Ovary (tissue), 10 donors: ENCODE measurements at regions of chr2 and their contacts with region 1.

Region 1: DNA sequence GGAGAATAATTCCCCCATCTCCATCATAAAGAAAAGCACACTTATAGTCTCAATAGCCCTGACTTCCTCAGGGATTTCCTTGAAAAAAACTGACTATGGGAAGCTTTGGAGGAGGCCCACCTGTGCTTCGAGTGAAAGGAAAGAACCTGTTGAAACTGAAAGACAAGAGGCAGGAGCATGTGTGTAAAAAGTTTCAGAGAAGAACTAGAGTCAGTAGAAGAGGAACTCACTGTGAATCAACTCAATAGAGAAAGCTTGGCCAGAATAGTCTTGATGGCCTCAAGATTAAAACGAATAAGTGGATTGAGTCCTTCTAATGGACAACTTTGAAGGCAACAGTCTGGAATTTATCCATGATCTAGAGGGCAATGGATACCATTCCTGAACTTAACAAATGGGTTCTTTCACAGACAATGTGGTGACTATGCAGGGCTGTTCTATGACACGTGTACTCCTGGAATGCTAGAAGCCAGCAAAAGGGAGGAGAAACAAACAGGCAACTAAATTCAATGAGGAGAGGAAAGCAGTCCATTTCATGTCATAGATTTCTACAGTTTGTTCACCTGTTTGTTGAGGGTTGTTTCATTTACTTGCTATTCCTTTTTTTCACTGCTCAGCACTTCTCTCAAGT is 442.3 kb downstream of the GRB14 start:
- DNase-seq: no peak
- H3K4me3 ChIP-seq: no peak overlapping the region
- H3K27ac ChIP-seq: no peak overlapping the region
- H3K4me1 ChIP-seq: no peaks in the 10 kb centered on the region
- H3K27me3 ChIP-seq: no peaks in the 10 kb centered on the region
- CTCF ChIP-seq: no peak
- EP300 ChIP-seq: no peak
- POLR2A ChIP-seq: no peak

Region 2: DNA sequence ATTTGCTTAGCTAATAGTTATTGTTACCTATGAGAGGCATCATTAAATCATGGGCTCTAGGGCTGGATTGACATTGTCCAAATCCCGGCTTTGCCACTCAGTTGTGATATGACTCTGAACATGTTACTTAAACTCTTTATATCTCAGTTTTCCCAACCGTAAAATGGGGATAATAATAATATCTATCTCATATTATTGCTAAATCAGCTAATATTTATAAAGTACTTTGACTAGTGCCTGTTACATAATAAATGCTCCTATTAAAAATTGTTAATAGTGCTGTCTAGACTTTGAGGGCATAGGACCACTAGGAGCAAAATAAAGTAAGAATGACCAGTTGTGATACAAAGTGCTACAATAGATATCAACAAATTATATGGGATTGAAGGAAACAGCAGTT is 66.8 kb before region 1 on chr2:
- intact Hi-C with region 1: loop called in 1 of 4 experiments (anchors 2 kb)
- DNase-seq: no peak
- H3K4me3 ChIP-seq: no peak overlapping the region
- H3K27ac ChIP-seq: no peak overlapping the region
- H3K4me1 ChIP-seq: no peaks in the 10 kb centered on the region
- H3K27me3 ChIP-seq: no peaks in the 10 kb centered on the region
- CTCF ChIP-seq: no peak
- EP300 ChIP-seq: no peak
- POLR2A ChIP-seq: no peak

Region 3: GRCh38 chr2:164252568-164253287 is 73.8 kb after region 1 on chr2:
- intact Hi-C with region 1: no loop called
- DNase-seq: no peak
- H3K4me3 ChIP-seq: no peak overlapping the region
- H3K27ac ChIP-seq: no peak overlapping the region
- H3K4me1 ChIP-seq: no peaks in the 10 kb centered on the region
- H3K27me3 ChIP-seq: no peaks in the 10 kb centered on the region
- CTCF ChIP-seq: no peak
- EP300 ChIP-seq: no peak
- POLR2A ChIP-seq: no peak

Region 4: GRCh38 chr2:164473021-164473420 is 294.1 kb after region 1 on chr2:
- intact Hi-C with region 1: no loop called
- DNase-seq: no peak
- H3K4me3 ChIP-seq: no peak overlapping the region
- H3K27ac ChIP-seq: no peak overlapping the region
- H3K4me1 ChIP-seq: no peaks in the 10 kb centered on the region
- H3K27me3 ChIP-seq: no peaks in the 10 kb centered on the region
- CTCF ChIP-seq: no peak
- EP300 ChIP-seq: no peak
- POLR2A ChIP-seq: no peak